T-cell (primary cell): ENCODE measurements at regions of chr1 and their contacts with region 1.

Region 1: DNA sequence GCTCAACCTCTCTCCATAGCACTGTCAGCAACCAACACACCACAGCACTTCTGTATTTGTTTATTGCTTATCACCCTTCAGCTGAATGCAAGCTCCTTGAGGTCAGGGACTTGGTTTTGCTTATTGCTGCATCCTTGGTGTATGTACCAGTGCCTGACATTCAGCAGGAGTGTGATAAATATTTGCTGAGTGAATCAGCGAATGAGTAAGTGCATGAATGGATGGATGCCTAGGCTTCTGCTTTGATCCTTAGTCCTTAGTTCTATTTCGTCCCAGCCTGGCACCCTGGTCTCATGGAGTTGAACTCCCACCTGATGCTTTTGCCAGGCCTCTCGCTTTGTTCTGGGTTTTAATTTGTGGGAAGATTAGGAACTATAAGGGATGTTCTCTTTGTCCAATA is 88.2 kb downstream of the ZSCAN20 start:
- DNase-seq: no peak
- ATAC-seq: no peak
- H3K4me3 ChIP-seq: no peak overlapping the region
- H3K4me3 Mint-ChIP-seq: no peak overlapping the region
- H3K27ac ChIP-seq: no peak overlapping the region
- H3K27ac Mint-ChIP-seq: no peak overlapping the region
- H3K4me1 ChIP-seq: no peaks in the 10 kb centered on the region
- H3K4me1 Mint-ChIP-seq: no peaks in the 10 kb centered on the region
- H3K27me3 ChIP-seq: peaks cover 0 to 6% of the 10 kb centered on the region in 2 experiments
- H3K27me3 Mint-ChIP-seq: peaks cover 19 to 22% of the 10 kb centered on the region in 2 donors

Region 2: DNA sequence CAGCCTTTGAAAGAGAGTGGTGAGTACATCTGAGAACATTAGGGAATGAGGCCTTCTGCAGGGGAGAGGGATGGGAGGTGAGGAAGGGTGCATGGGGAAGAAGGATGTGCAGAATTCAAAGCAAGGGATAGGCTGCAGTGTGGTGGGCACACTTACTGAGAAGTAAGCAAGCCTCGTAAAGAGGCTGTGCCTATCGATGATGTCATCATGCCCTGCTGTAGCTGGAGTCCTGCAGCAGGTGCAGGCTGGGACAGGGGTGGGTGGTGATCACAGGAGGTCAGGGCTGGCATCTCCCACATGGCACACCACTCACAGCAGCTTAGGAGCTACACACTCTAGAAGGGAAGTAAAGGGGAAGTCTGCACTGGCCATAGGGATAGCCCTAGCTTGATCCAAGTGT is 72.0 kb before region 1 on chr1:
- CTCF ChIA-PET with region 1: no interaction called
- POLR2A ChIA-PET with region 1: no interaction called
- DNase-seq: no peak
- ATAC-seq: no peak
- H3K4me3 ChIP-seq: no peak overlapping the region
- H3K4me3 Mint-ChIP-seq: no peak overlapping the region
- H3K27ac ChIP-seq: no peak overlapping the region
- H3K27ac Mint-ChIP-seq: no peak overlapping the region
- H3K4me1 ChIP-seq: no peaks in the 10 kb centered on the region
- H3K4me1 Mint-ChIP-seq: no peaks in the 10 kb centered on the region
- H3K27me3 ChIP-seq: no peaks in the 10 kb centered on the region
- H3K27me3 Mint-ChIP-seq: no peaks in the 10 kb centered on the region

Region 3: DNA sequence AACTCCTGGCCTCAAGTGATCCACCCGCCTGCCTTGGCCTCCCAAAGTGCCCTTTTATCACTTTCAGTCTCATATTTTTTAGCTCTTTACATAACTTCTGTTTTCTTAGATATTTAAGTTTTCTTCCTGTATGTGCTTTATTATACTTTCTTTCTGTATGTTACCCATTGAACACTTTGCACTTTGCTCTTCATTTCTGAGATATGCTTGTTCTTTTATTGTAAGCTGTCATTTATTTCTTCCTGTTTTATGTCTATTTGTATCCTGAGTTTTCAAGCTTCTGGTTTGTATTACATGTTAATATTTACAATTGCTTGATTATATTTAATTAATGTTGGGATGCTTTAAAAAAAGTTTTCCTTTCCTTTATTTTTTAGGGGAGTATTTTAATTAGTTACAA is 52.5 kb before region 1 on chr1:
- CTCF ChIA-PET with region 1: no interaction called
- POLR2A ChIA-PET with region 1: interaction called in 1 of 2 experiments, 13 read pairs
- DNase-seq: no peak
- ATAC-seq: no peak
- H3K4me3 ChIP-seq: no peak overlapping the region
- H3K4me3 Mint-ChIP-seq: no peak overlapping the region
- H3K27ac ChIP-seq: no peak overlapping the region
- H3K27ac Mint-ChIP-seq: no peak overlapping the region
- H3K4me1 ChIP-seq: no peaks in the 10 kb centered on the region
- H3K4me1 Mint-ChIP-seq: no peaks in the 10 kb centered on the region
- H3K27me3 ChIP-seq: peaks cover 0 to 2% of the 10 kb centered on the region in 2 experiments
- H3K27me3 Mint-ChIP-seq: peaks cover 1 to 7% of the 10 kb centered on the region in 2 donors

Region 4: GRCh38 chr1:33724348-33724747 is 163.7 kb after region 1 on chr1:
- CTCF ChIA-PET with region 1: no interaction called
- POLR2A ChIA-PET with region 1: no interaction called
- DNase-seq: no peak
- ATAC-seq: no peak
- H3K4me3 ChIP-seq: no peak overlapping the region
- H3K4me3 Mint-ChIP-seq: no peak overlapping the region
- H3K27ac ChIP-seq: no peak overlapping the region
- H3K27ac Mint-ChIP-seq: no peak overlapping the region
- H3K4me1 ChIP-seq: no peaks in the 10 kb centered on the region
- H3K4me1 Mint-ChIP-seq: no peaks in the 10 kb centered on the region
- H3K27me3 ChIP-seq: no peaks in the 10 kb centered on the region
- H3K27me3 Mint-ChIP-seq: peaks cover 6 to 8% of the 10 kb centered on the region in 2 donors